ENCODE measurements at regions of chr6 and their contacts with region 1.

Region 1: GRCh38 chr6:17584241-17584803 is 15.8 kb upstream of the FAM8A1 start:
- DNase-seq: peak; percentile 75
- ATAC-seq: peak; percentile 75
- H3K4me3 ChIP-seq: peak overlapping the region; percentile 15; the same call in 1 of the 2 replicates
- H3K27ac ChIP-seq: no peak overlapping the region
- H3K4me1 ChIP-seq: peaks cover 9% of the 10 kb centered on the region
- H3K27me3 ChIP-seq: no peaks in the 10 kb centered on the region
- CTCF ChIP-seq: peak; percentile 96

Region 2: GRCh38 chr6:17156112-17156921 is 428.0 kb before region 1 on chr6:
- CTCF ChIA-PET with region 1: no interaction called
- POLR2A ChIA-PET with region 1: no interaction called
- intact Hi-C with region 1: loop called (anchors 1 kb)
- DNase-seq: peak; percentile 88
- ATAC-seq: peak; percentile 76
- H3K4me3 ChIP-seq: no peak overlapping the region
- H3K27ac ChIP-seq: no peak overlapping the region
- H3K4me1 ChIP-seq: no peaks in the 10 kb centered on the region
- H3K27me3 ChIP-seq: no peaks in the 10 kb centered on the region
- CTCF ChIP-seq: peak; percentile 94

Region 3: GRCh38 chr6:17392978-17393891 is 191.1 kb before region 1 on chr6 and contains the start of gene CAP2:
- CTCF ChIA-PET with region 1: no interaction called
- POLR2A ChIA-PET with region 1: interaction called, 3 read pairs
- intact Hi-C with region 1: loop called (anchors 1 kb)
- DNase-seq: peak; percentile 74
- ATAC-seq: peak; percentile 83
- H3K4me3 ChIP-seq: peak within 1 kb of the TSS; percentile 92
- H3K27ac ChIP-seq: peak within 1 kb of the TSS; percentile 56
- H3K4me1 ChIP-seq: peaks cover 35% of the 10 kb centered on the region
- H3K27me3 ChIP-seq: no peaks in the 10 kb centered on the region
- CTCF ChIP-seq: no peak
- total RNA-seq, gene CAP2: 8.2 and 11.6 TPM in 2 replicates

Region 4: GRCh38 chr6:17494919-17495318 is 89.4 kb before region 1 on chr6:
- CTCF ChIA-PET with region 1: no interaction called
- POLR2A ChIA-PET with region 1: no interaction called
- intact Hi-C with region 1: loop called (anchors 5 kb)
- DNase-seq: no peak
- ATAC-seq: no peak
- H3K4me3 ChIP-seq: no peak overlapping the region
- H3K27ac ChIP-seq: no peak overlapping the region
- H3K4me1 ChIP-seq: no peaks in the 10 kb centered on the region
- H3K27me3 ChIP-seq: no peaks in the 10 kb centered on the region
- CTCF ChIP-seq: no peak

Region 5: GRCh38 chr6:17820055-17820454 is 235.7 kb after region 1 on chr6:
- CTCF ChIA-PET with region 1: no interaction called
- POLR2A ChIA-PET with region 1: interaction called, 3 read pairs
- intact Hi-C with region 1: loop called (anchors 2 kb)
- DNase-seq: peak; percentile 14
- ATAC-seq: peak; percentile 57
- H3K4me3 ChIP-seq: no peak overlapping the region
- H3K27ac ChIP-seq: no peak overlapping the region
- H3K4me1 ChIP-seq: peaks cover 10% of the 10 kb centered on the region; the same call in 1 of the 2 replicates
- H3K27me3 ChIP-seq: no peaks in the 10 kb centered on the region
- CTCF ChIP-seq: no peak